Aorta (tissue), 5 donors: ENCODE measurements at regions of chr1 and their contacts with region 1.

Region 1: DNA sequence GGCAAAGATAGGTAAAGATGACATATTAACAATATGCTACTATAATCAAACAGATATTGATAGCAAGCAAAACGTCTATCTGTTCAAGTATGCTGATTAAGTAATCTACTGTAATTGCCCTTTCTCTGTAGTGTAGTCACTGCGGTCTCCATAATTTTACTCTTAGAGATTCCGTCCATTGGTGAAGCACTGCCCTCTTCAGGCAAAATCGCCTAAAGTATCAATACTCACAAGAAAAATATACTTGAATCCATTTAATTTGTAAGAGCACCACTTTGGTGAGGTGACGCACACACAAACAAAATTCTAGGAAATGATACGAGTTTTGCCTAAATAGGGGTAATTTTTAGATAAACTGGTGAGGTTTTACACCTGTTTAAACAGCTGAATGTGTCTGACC is 434.6 kb upstream of the CHRM3 start:
- DNase-seq: no peak
- ATAC-seq: peak; percentile 41
- H3K4me3 ChIP-seq: no peak overlapping the region
- H3K27ac ChIP-seq: no peak overlapping the region
- H3K4me1 ChIP-seq: no peaks in the 10 kb centered on the region
- H3K27me3 ChIP-seq: no peaks in the 10 kb centered on the region

Region 2: GRCh38 chr1:238252033-238252802 is 699.6 kb before region 1 on chr1:
- intact Hi-C with region 1: loop called (anchors 2 to 10 kb)
- DNase-seq: peak in 1 of 2 donors; percentile 50
- ATAC-seq: no peak
- H3K4me3 ChIP-seq: no peak overlapping the region
- H3K27ac ChIP-seq: no peak overlapping the region
- H3K4me1 ChIP-seq: no peaks in the 10 kb centered on the region
- H3K27me3 ChIP-seq: no peaks in the 10 kb centered on the region

Region 3: DNA sequence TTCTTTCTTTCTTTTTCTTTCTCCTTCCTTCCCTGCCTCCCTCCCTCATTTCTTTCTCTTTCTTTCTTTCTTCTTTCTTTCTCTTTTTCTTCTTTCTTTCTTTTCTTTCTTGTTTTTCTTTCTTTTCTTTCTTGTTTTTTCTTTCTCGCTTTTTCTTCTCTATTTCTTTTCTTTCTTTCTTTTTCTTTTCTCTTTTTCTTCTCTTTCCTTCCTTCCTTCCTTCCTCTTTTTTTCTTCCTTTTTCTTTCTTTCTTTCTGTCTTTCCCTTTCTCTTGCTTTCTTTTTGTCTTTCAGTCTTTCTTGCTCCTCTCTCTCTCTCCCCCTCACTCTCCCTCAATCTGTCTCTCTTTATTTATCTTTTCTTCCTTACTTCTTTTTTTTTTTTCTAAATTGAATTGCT is 37.5 kb before region 1 on chr1:
- intact Hi-C with region 1: no loop called
- DNase-seq: no peak
- ATAC-seq: no peak
- H3K4me3 ChIP-seq: no peak overlapping the region
- H3K27ac ChIP-seq: no peak overlapping the region
- H3K4me1 ChIP-seq: no peaks in the 10 kb centered on the region
- H3K27me3 ChIP-seq: no peaks in the 10 kb centered on the region

Region 4: GRCh38 chr1:239025223-239025622 is 73.4 kb after region 1 on chr1:
- intact Hi-C with region 1: no loop called
- DNase-seq: no peak
- ATAC-seq: no peak
- H3K4me3 ChIP-seq: no peak overlapping the region
- H3K27ac ChIP-seq: no peak overlapping the region
- H3K4me1 ChIP-seq: no peaks in the 10 kb centered on the region
- H3K27me3 ChIP-seq: no peaks in the 10 kb centered on the region

Region 5: DNA sequence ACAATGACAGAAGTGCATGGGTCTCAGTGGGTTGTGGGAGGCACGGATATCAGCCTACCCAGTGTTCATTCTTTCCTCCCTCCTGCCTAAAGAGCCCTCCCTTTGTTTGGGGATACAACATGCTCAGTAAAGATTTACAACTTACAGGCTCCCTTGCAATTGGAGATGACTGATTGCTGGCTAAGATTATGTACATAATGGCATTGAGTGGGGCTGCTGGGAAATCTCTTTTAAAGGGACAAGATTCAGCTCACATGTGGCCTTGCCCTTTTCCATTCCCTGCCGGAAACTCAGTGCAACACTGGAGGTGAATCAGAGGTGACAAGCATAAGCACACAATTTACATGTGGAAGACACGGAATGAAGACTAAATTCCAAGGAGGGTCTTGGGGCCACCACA is 350.9 kb after region 1 on chr1:
- intact Hi-C with region 1: no loop called
- DNase-seq: no peak
- ATAC-seq: no peak
- H3K4me3 ChIP-seq: no peak overlapping the region
- H3K27ac ChIP-seq: no peak overlapping the region
- H3K4me1 ChIP-seq: no peaks in the 10 kb centered on the region
- H3K27me3 ChIP-seq: no peaks in the 10 kb centered on the region

Region 6: GRCh38 chr1:239505086-239505485 is 553.3 kb after region 1 on chr1:
- intact Hi-C with region 1: no loop called
- DNase-seq: no peak
- ATAC-seq: no peak
- H3K4me3 ChIP-seq: no peak overlapping the region
- H3K27ac ChIP-seq: no peak overlapping the region
- H3K4me1 ChIP-seq: no peaks in the 10 kb centered on the region
- H3K27me3 ChIP-seq: no peaks in the 10 kb centered on the region